Right ventricle myocardium superior (tissue), 1 donor: ENCODE measurements at regions of chr14 and their contacts with region 1.

Region 1: DNA sequence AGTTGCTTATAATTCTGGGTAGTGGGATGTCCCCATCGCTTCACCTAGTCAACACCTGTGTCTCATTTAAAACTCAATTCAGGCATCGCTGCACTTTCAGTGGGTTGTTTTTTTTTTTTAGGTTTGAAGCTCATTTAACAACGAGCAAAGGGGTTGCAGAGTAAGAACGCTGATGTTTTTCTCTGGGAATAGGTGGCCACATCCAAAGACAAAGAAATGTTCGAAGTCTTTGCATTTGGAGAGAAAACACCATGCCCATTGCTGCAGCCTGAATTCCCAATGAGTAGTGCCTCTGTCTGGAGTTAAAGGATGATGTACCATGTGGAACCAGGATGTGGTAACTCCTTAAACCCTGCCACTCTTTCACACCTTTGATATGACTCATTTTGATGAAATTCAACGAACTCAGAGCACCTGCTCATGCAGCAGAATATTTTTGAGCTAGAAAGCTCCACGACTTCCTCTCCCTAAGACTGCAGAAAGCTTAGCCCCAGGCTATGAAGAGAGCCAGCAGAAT is 35.1 kb upstream of the BATF start:
- DNase-seq: no peak
- ATAC-seq: no peak

Region 2: DNA sequence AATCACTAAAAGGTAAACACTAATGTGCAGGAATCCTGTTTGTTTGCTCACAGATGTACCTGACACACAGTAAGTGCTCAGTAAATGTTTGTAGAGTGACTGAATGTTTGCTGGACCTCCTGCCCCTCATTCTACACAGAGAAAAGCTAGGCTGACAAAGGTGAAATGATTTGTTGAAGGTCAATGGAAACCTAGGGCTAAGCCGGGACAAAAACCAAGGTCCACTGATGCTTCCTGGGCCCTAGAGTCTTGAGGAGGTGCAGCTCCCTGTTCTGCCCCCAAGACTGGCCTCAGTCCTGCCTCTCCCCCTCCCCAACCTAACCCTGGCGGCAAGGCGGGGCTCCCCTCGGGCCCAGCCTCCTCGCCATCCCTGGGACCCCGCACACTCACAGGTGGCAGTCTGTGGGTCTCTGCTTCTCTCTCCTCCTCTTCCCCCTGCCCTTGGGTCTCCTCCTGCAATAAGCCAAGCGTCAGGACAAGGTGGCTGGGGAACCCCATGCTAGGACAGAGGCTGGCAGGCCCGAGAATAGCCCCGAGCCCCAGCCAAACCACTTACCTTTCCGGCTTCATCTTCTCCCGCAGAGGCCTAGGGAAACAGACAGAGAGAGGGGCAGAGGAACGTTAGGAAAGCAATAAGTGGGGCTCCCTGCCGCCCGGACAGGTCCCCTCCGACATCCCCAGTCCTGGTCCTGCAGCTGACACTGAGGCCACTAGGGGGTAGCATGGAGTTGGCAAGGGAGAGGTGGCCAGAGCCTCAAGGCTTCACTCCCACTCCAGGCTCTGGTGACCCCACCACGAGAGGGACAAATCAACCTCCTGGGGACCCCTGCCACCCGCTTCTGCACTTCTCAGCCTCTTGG is 541.2 kb before region 1 on chr14:
- intact Hi-C with region 1: no loop called
- DNase-seq: peak; percentile 80
- ATAC-seq: peak; percentile 86

Region 3: DNA sequence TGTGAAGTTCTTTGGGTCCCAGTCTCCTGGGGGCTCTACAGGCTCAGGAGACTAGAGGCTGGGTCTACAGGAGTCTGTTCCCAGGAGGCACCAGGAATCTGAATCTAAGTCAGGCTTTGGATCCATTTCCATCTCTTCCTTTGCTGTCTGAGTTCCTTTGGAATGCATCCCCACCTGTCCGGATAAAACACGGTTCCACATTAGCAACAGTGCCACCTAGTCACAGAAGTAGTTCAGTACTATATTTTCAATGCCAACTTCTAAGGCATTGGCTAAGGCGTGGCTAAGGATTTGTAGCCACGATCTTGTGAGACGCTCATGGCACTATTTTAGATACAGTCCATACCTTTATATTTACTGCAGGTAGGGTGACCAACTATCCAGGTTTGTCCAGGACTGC is 402.7 kb before region 1 on chr14:
- intact Hi-C with region 1: no loop called
- DNase-seq: no peak
- ATAC-seq: peak; percentile 24

Region 4: GRCh38 chr14:75126679-75127473 is 360.3 kb before region 1 on chr14 and contains the start of gene NEK9:
- intact Hi-C with region 1: loop called (anchors 5 kb)
- DNase-seq: peak; percentile 95
- ATAC-seq: peak; percentile 97
- total RNA-seq, gene NEK9: 109 TPM

Region 5: DNA sequence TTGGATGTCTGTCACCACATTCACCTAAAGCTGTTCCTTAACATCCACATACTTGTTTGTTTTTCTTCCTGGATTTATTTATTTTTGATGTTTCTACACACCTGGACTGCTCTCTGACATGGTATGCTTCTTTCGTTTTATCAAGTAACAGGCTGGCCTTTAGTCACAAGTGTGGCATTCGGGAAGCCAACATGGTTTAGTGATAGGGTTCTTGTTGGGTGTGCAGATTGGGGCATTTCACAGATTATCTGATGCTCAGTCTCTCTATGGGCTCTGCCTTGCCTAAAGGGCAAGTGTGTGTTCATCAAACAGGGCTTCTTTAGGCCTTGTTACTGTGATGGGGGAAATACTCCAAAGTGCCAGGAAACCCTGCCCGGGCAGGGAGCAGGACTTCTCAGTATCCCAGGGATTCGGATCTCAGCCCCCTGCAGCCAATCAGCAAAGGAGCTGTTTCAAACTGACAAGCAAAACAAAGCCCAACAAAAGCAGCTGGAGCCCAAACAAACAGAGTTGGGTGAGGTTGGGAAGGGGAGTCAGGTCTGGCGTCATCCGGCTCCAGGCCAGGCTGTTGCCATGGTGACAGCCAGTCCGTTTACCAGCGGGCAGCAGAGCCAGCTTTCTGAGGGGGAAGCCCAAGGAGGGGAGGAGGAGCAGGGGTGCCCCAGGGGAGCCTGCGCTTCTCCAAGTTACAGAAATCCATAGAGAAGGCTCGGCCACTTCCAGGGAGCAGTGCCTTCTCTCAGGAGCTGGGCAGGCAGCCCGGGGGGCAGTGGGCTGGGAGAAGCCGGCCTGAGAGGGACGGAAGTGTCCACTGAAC is 176.7 kb before region 1 on chr14:
- intact Hi-C with region 1: loop called (anchors 2 kb)
- DNase-seq: peak; percentile 94
- ATAC-seq: peak; percentile 79